Activated naive CD4-positive, alpha-beta T cell treated with anti-CD3 and anti-CD28 coated beads for 36 hours (primary cell): ENCODE measurements at regions of chrX and their contacts with region 1.

Region 1: GRCh38 chrX:130091958-130092522 is 18.3 kb downstream of the ELF4 start:
- DNase-seq: peak; percentile 94
- H3K4me3 Mint-ChIP-seq: peak overlapping the region; percentile 80
- H3K27ac Mint-ChIP-seq: peak overlapping the region; percentile 96
- H3K4me1 Mint-ChIP-seq: peaks cover 58% of the 10 kb centered on the region
- H3K27me3 Mint-ChIP-seq: no peaks in the 10 kb centered on the region

Region 2: DNA sequence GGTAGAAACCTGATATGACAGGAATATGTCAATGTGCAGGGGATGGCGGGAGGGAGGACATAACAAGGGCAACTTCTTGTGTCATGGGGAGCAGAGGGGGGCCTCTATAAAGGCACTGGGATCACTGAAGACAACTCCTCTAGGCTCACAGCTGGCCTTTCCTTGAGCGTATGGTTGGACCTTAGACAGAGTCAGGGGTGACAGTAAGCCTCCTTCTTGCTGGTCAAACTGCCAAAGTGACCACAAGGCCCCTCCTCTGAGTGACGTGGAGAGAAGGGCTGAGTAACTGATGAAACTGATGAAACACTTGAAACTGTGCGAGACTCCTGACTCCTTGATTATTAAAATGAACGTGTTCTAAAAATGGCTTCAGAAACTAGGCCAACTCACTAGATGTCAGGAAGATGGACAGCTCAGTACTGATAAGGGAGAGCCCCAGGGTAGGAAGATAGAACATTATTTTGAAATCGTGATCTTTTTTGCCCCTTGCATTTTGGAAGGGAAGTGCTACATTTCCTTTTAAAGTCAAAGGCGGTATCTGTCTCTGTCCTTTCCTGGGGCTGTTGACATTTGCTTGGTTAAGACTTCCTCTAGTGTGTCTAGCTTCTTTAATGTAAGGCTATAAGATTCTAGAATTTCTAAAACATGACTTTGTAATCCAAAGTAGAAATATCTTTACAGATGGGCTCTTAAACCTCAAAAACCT is 81.3 kb after region 1 on chrX:
- CTCF ChIA-PET with region 1: interaction called, 4 read pairs
- intact Hi-C with region 1: loop called (anchors 1 kb)
- DNase-seq: peak; percentile 68
- H3K4me3 Mint-ChIP-seq: peak overlapping the region; percentile 87
- H3K27ac Mint-ChIP-seq: peak overlapping the region; percentile 94
- H3K4me1 Mint-ChIP-seq: peaks cover 45% of the 10 kb centered on the region
- H3K27me3 Mint-ChIP-seq: no peaks in the 10 kb centered on the region